ENCODE measurements at regions of chr18 and their contacts with region 1.

Region 1: GRCh38 chr18:55405893-55406406 is 182.0 kb downstream of the TCF4 start:
- DNase-seq: no peak
- CTCF ChIP-seq: no peak

Region 2: DNA sequence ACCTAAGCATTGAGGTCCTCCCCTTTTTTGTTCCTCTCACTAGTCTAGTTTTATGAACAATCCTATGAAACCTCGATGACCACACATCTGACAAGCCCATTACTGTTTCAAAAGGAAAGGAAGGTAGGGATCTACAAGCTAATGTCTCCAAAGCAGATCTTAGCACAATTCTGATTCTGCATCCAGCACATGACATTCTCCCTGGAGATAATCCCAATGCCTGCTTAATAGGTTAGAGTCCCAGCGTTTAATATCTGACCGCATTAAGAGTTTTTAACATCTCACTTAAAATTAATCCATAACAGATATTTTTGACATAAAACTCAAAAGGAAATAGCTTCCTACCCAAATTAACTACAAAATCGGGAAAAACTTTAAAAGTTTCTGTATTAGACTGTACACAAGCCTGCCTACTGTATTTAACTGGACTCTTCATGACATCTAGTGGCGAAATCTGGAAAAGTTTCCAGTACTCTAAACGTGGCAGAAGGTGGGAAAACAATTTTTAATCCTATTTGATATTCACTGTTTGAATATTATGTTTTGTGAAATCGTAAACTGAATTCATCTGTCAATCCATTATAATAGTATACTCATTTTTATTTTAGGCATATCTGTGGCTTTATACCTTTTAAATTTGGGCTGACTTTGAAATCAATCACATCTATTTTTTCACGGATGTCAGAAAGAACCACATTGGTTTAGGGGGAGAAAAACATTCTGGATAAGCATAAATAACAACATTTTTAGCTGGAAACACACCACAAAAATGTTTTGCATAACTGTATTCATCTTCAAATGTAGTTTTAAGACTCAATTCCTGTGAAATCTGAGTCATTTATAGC is 1170.1 kb after region 1 on chr18:
- in situ Hi-C with region 1: loop called (anchors 10 kb)
- DNase-seq: peak; percentile 63
- CTCF ChIP-seq: peak; percentile 33

Measured in GM13976 (cell line).